PC-9 (cell line): ENCODE measurements at regions of chr1 and their contacts with region 1.

Region 1: DNA sequence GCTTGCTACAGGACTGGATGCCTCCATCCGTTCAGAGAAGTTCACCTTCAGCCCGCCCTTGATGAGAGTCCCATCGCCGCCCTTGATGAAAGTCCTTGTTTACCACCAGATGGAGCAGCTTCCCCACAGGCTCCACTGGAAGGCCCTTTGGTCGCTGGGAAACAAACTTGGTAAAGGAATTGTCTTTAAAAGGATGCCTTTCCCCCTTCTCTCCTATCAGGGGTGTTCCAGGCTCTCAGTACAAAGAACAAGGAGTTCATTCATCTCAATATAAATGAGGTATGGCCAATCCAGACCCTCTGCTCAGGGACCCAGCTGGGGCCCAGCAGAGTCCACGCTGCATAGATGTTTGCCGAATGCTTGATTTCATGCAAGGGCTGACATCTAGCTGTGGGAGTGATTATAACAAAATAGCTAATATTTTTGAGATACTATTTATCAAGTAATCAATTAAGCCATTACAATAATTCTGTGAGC is 50.8 kb downstream of the CAPN9 start:
- DNase-seq: peak; percentile 43 to 49
- H3K4me3 ChIP-seq: no peak overlapping the region
- H3K27ac ChIP-seq: no peak overlapping the region
- H3K4me1 ChIP-seq: no peaks in the 10 kb centered on the region
- H3K27me3 ChIP-seq: no peaks in the 10 kb centered on the region
- CTCF ChIP-seq: peak; percentile 76

Region 2: GRCh38 chr1:230917284-230918135 is 119.5 kb after region 1 on chr1:
- CTCF ChIA-PET with region 1: no interaction called
- POLR2A ChIA-PET with region 1: no interaction called
- intact Hi-C with region 1: loop called (anchors 1 kb)
- DNase-seq: peak in 1 of 2 experiments; percentile 38
- H3K4me3 ChIP-seq: no peak overlapping the region
- H3K27ac ChIP-seq: no peak overlapping the region
- H3K4me1 ChIP-seq: no peaks in the 10 kb centered on the region
- H3K27me3 ChIP-seq: no peaks in the 10 kb centered on the region
- CTCF ChIP-seq: peak; percentile 65

Region 3: GRCh38 chr1:230978491-230979388 is 180.8 kb after region 1 on chr1 and contains the starts of genes ARV1 and TTC13:
- CTCF ChIA-PET with region 1: no interaction called
- POLR2A ChIA-PET with region 1: no interaction called
- intact Hi-C with region 1: loop called (anchors 1 kb)
- DNase-seq: peak; percentile 97 to 98
- H3K4me3 ChIP-seq: peak within 1 kb of the TSS; percentile 86
- H3K27ac ChIP-seq: no peak within 1 kb of the TSS
- H3K4me1 ChIP-seq: peaks cover 19% of the 10 kb centered on the region
- H3K27me3 ChIP-seq: no peaks in the 10 kb centered on the region
- CTCF ChIP-seq: peak; percentile 50; the same call in 1 of the 2 replicates
- total RNA-seq, gene ARV1: 8.0 and 12.0 TPM in 2 replicates
- total RNA-seq, gene TTC13: 7.5 and 10.7 TPM in 2 replicates

Region 4: DNA sequence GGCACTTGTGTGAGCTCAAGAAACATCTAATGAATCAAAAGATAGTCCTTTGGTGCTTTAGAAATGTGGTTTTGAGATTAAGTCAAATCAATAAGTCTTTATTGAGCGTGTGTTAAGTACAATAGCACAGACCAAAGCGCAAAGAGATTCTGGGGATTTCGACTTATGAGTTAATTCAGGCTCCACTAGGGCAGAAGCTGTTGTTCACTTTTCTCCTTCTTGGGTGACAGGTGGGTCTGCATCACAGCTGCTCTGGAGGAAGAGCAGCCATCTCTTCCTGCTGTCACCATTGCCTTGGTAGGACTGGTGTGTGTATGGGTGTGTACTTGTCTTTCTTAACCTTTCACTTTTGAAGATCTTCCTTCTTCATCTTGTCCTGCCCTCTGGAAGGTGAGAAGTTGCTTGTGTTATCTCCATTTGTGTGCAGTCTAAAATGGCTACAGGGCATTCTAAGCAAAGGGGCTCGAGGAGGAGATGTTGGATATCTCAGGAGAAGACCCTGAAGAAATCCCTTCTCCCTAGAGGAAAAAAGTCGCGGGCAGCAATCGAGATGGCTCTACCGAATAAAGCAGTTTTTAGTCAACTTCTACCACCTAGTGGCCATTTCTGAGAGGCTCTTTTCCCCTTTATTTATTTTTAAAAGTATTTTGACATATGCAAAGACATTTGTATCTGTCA is 805.8 kb after region 1 on chr1:
- CTCF ChIA-PET with region 1: no interaction called
- POLR2A ChIA-PET with region 1: no interaction called
- intact Hi-C with region 1: loop called (anchors 5 kb)
- DNase-seq: peak; percentile 40 to 53
- H3K4me3 ChIP-seq: peak overlapping the region; percentile 66
- H3K27ac ChIP-seq: no peak overlapping the region
- H3K4me1 ChIP-seq: peaks cover 12% of the 10 kb centered on the region
- H3K27me3 ChIP-seq: no peaks in the 10 kb centered on the region
- CTCF ChIP-seq: peak; percentile 83